ENCODE measurements at regions of chr11 and their contacts with region 1.

Region 1: GRCh38 chr11:68763926-68764639 is 12.8 kb upstream of the TESMIN start:
- DNase-seq: no peak
- H3K4me3 ChIP-seq: no peak overlapping the region
- H3K27ac ChIP-seq: peak overlapping the region; percentile 88
- H3K4me1 ChIP-seq: peaks cover 23% of the 10 kb centered on the region
- H3K27me3 ChIP-seq: no peaks in the 10 kb centered on the region
- CTCF ChIP-seq: 0 out of 2 replicates have a peak, but pooled peaks have one; percentile 38

Region 2: GRCh38 chr11:68751004-68751856 is 12.9 kb before region 1 on chr11 and contains the start of gene TESMIN:
- CTCF ChIA-PET with region 1: no interaction called
- POLR2A ChIA-PET with region 1: no interaction called
- intact Hi-C with region 1: loop called (anchors 1 kb)
- DNase-seq: peak; percentile 69 to 94
- H3K4me3 ChIP-seq: peak within 1 kb of the TSS; percentile 71
- H3K27ac ChIP-seq: no peak within 1 kb of the TSS
- H3K4me1 ChIP-seq: no peaks in the 10 kb centered on the region
- H3K27me3 ChIP-seq: no peaks in the 10 kb centered on the region
- CTCF ChIP-seq: no peak
- total RNA-seq, gene TESMIN: 23.9 and 43.3 TPM in 2 replicates

Region 3: GRCh38 chr11:68780829-68781228 is 16.7 kb after region 1 on chr11:
- CTCF ChIA-PET with region 1: no interaction called
- POLR2A ChIA-PET with region 1: no interaction called
- intact Hi-C with region 1: loop called (anchors 1 kb)
- DNase-seq: peak in 1 of 2 experiments; percentile 11
- H3K4me3 ChIP-seq: no peak overlapping the region
- H3K27ac ChIP-seq: no peak overlapping the region
- H3K4me1 ChIP-seq: peaks cover 19% of the 10 kb centered on the region
- H3K27me3 ChIP-seq: no peaks in the 10 kb centered on the region
- CTCF ChIP-seq: no peak

Measured in PC-9 (cell line).